ENCODE measurements at regions of chr19 and their contacts with region 1.

Region 1: GRCh38 chr19:40750059-40750873 is at the start of gene ACTMAP:
- DNase-seq: peak; percentile 100
- ATAC-seq: peak; percentile 86
- H3K4me3 Mint-ChIP-seq: peak within 1 kb of the TSS; percentile 89
- H3K27ac Mint-ChIP-seq: peak within 1 kb of the TSS; percentile 97
- H3K4me1 Mint-ChIP-seq: peaks cover 38% of the 10 kb centered on the region
- H3K27me3 Mint-ChIP-seq: no peaks in the 10 kb centered on the region
- total RNA-seq, gene ACTMAP: 15.2 to 17.1 TPM

Region 2: GRCh38 chr19:40716655-40717324 is 33.5 kb before region 1 on chr19 and contains the starts of genes COQ8B and ITPKC:
- CTCF ChIA-PET with region 1: interaction called, 7 read pairs
- POLR2A ChIA-PET with region 1: interaction called, 11 read pairs
- DNase-seq: peak; percentile 100
- ATAC-seq: peak; percentile 63
- H3K4me3 Mint-ChIP-seq: peak within 1 kb of the TSS; percentile 94
- H3K27ac Mint-ChIP-seq: peak within 1 kb of the TSS; percentile 98
- H3K4me1 Mint-ChIP-seq: peaks cover 57% of the 10 kb centered on the region
- H3K27me3 Mint-ChIP-seq: no peaks in the 10 kb centered on the region
- total RNA-seq, gene COQ8B: 21.5 to 27.2 TPM
- total RNA-seq, gene ITPKC: 4.7 to 5.3 TPM

Region 3: GRCh38 chr19:40777937-40778705 is 27.9 kb after region 1 on chr19 and contains the start of gene RAB4B:
- CTCF ChIA-PET with region 1: interaction called, 21 read pairs
- POLR2A ChIA-PET with region 1: interaction called, 94 read pairs
- DNase-seq: peak; percentile 100
- ATAC-seq: peak; percentile 87
- H3K4me3 Mint-ChIP-seq: peak within 1 kb of the TSS; percentile 91
- H3K27ac Mint-ChIP-seq: peak within 1 kb of the TSS; percentile 99
- H3K4me1 Mint-ChIP-seq: peaks cover 41% of the 10 kb centered on the region
- H3K27me3 Mint-ChIP-seq: no peaks in the 10 kb centered on the region
- total RNA-seq, gene RAB4B: 50.2 to 53.1 TPM

Region 4: GRCh38 chr19:40798223-40798996 is 48.1 kb after region 1 on chr19:
- CTCF ChIA-PET with region 1: interaction called, 12 read pairs
- POLR2A ChIA-PET with region 1: interaction called, 10 read pairs
- DNase-seq: peak; percentile 100
- ATAC-seq: peak; percentile 86
- H3K4me3 Mint-ChIP-seq: peak overlapping the region; percentile 93
- H3K27ac Mint-ChIP-seq: peak overlapping the region; percentile 96
- H3K4me1 Mint-ChIP-seq: peaks cover 54% of the 10 kb centered on the region
- H3K27me3 Mint-ChIP-seq: no peaks in the 10 kb centered on the region

Region 5: DNA sequence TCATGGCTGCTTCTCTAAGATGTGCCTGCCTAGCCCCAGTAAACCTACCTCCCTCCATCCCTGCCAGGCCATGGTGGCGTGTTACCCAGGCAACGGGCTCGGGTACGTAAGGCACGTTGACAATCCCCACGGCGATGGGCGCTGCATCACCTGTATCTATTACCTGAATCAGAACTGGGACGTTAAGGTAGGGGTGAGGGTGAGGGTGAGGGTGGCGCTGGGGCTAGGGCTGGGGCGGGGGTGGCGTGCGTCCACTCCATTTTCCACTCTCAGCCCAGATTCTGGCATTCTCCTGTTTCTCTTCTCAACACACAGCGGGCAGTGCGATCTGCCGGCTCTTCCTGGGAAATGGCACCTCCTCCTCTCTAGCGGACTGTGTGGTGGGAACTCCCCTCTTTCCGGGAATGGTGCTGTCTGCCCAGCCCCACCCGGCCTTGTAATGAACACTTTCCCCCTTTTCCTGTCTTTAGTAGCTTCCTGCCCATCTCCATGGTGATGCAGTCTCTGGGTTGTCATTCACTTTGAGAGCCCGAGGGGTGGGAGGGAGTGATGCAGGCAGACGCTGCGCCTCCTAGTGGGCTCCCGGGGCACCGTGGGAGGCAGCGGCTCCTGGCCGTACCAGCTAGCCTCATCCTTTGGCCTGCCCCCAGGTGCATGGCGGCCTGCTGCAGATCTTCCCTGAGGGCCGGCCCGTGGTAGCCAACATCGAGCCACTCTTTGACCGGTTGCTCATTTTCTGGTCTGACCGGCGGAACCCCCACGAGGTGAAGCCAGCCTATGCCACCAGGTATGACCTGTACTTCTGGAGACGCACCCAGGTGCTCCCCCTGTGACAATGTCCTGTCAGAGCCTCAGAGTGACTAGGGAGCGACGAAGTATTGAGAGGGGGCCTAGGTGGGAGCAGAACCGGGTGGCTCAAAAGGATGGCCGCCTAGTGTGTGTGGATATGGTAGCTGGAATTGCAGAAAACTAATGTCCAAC is 56.5 kb after region 1 on chr19:
- CTCF ChIA-PET with region 1: interaction called, 27 read pairs
- POLR2A ChIA-PET with region 1: interaction called, 8 read pairs
- DNase-seq: peak; percentile 86
- ATAC-seq: peak; percentile 56
- H3K4me3 Mint-ChIP-seq: peak overlapping the region; percentile 95
- H3K27ac Mint-ChIP-seq: peak overlapping the region; percentile 95
- H3K4me1 Mint-ChIP-seq: peaks cover 94% of the 10 kb centered on the region
- H3K27me3 Mint-ChIP-seq: peaks cover 3% of the 10 kb centered on the region

Region 6: GRCh38 chr19:40813182-40813958 is 63.1 kb after region 1 on chr19:
- CTCF ChIA-PET with region 1: interaction called, 27 read pairs
- POLR2A ChIA-PET with region 1: no interaction called
- DNase-seq: no peak
- ATAC-seq: no peak
- H3K4me3 Mint-ChIP-seq: no peak overlapping the region
- H3K27ac Mint-ChIP-seq: no peak overlapping the region
- H3K4me1 Mint-ChIP-seq: peaks cover 39% of the 10 kb centered on the region
- H3K27me3 Mint-ChIP-seq: peaks cover 21% of the 10 kb centered on the region